Colonic mucosa (tissue), 4 donors: ENCODE measurements at regions of chr16 and their contacts with region 1.

Region 1: DNA sequence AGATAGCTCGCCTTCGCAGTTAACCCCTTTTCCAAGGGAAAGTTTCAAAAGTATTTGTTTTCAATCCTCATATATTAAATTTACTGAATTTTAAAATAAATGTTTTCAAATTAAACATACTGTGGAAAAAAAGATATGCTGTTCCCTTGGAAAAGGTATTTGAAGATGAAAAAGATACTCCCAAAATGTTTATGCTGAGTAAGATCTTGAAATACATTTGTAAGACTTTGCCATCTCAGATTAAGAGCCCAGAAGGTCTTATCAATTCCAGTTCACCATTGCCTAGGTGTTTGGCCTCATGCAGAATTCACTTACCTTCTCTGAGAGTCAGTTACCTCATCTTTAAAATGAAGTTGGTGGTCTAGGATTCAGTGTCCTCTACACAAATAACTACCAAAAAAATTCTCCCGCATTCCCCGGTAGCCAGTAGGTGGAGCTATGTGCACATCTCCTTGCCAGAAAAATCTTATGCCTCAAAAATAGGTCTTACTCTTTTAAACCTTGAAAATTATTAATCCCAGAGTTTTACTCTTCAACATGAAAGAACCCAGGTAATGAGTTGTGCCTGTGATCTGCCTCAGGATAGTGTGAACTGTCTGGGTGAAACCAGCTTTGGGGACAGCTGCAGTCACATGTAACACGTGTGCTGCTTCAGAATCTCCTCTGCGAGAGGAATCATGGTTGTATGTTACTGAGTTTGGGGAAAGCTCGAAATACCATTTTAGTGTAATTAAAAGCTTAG is 178.3 kb downstream of the MRTFB start:
- DNase-seq: peak; percentile 45
- H3K4me3 ChIP-seq: no peak overlapping the region
- H3K27ac ChIP-seq: no peak overlapping the region
- H3K4me1 ChIP-seq: no peaks in the 10 kb centered on the region
- H3K27me3 ChIP-seq: no peaks in the 10 kb centered on the region
- CTCF ChIP-seq: peak; percentile 78

Region 2: DNA sequence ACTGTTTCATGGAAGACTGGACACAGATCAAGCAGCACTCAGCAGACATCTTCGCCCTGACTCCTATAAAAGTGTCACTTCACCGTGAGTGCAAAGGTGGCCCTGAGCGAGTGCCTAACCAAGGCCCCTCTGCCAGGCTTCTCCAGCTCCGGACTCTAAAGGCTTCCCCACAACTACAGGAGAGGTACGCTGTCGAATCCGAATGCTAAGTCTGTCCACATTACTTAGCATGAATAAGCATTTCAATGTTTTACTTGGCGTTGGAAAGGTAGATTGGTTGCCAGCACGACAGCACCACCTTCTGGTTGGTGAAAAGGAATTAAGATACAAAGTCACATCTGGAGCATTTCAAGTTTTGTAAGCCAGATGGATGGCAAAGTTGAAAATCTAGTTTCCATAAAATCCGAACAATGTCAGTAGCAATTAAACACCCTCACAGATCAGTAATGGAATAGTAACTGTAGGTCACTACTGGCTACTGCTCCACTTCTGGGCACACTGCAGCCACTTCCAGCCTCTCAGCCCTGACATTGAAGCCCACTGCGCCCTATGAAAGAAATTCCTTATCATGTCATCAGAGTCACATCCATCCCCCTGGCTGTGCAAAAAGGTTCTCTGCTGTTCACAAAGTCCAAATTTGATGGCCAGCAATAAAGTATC is 279.7 kb after region 1 on chr16:
- intact Hi-C with region 1: loop called (anchors 2 kb)
- DNase-seq: peak; percentile 78
- H3K4me3 ChIP-seq: no peak overlapping the region
- H3K27ac ChIP-seq: no peak overlapping the region
- H3K4me1 ChIP-seq: no peaks in the 10 kb centered on the region
- H3K27me3 ChIP-seq: no peaks in the 10 kb centered on the region
- CTCF ChIP-seq: peak; percentile 62

Region 3: GRCh38 chr16:14600164-14600563 is 350.7 kb after region 1 on chr16:
- intact Hi-C with region 1: loop called (anchors 10 kb)
- DNase-seq: no peak
- H3K4me3 ChIP-seq: no peak overlapping the region
- H3K27ac ChIP-seq: no peak overlapping the region
- H3K4me1 ChIP-seq: no peaks in the 10 kb centered on the region
- H3K27me3 ChIP-seq: no peaks in the 10 kb centered on the region
- CTCF ChIP-seq: peak; percentile 38